H1 (cell line): ENCODE measurements at regions of chr13 and their contacts with region 1.

Region 1: GRCh38 chr13:26186118-26186870 is 35.8 kb downstream of the RNF6 start:
- DNase-seq: peak; percentile 90 to 91
- H3K4me3 ChIP-seq: peak overlapping the region; percentile 50 to 73 (median 62)
- H3K27ac ChIP-seq: no peak overlapping the region
- H3K4me1 ChIP-seq: peaks cover 0 to 4% (median 1%) of the 10 kb centered on the region in 4 experiments; a peak in 2 of 7 replicates
- H3K27me3 ChIP-seq: peaks cover 0 to 7% (median 1%) of the 10 kb centered on the region in 4 experiments; a peak in 4 of 7 replicates
- CTCF ChIP-seq: peak; percentile 59 to 87 (median 64)
- EP300 ChIP-seq: no peak
- POLR2A ChIP-seq: no peak
- RAD21 ChIP-seq: peak; percentile 38 to 50; a peak in 2 of 4 replicates

Region 2: DNA sequence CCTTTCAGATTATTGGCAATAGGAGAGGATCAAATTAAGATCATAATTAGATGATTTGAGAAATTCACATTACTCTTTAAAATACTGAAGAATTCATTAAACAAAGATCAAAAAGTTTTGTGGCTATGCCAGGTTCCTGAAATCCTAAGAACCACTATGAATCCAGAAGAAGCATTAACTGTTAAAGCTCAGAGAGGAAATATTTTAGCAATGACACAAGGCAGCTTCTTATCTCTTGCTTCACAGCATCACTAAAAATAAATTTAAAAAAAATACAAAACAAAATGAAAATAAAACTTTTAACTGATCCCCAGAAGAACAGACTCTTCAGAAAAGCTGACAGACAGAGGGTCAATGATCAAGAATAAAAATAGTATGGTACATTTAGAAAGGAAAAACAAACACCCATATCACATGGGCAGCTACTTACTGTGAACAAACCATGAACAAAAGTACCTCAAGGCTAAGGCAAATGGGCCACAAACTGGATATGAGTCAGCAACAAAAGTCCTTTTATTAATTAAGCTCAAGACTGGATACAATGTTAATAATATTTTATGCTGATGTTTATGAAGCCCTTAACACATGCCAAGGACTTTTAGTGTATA is 16.2 kb after region 1 on chr13:
- CTCF ChIA-PET with region 1: interaction called, 12 read pairs
- POLR2A ChIA-PET with region 1: no interaction called
- DNase-seq: no peak
- H3K4me3 ChIP-seq: no peak overlapping the region
- H3K27ac ChIP-seq: no peak overlapping the region
- H3K4me1 ChIP-seq: peaks cover 0 to 4% (median 0%) of the 10 kb centered on the region in 4 experiments; a peak in 1 of 7 replicates
- H3K27me3 ChIP-seq: peaks cover 0 to 1% (median 0%) of the 10 kb centered on the region in 4 experiments; a peak in 1 of 7 replicates
- CTCF ChIP-seq: no peak
- EP300 ChIP-seq: no peak
- POLR2A ChIP-seq: no peak
- RAD21 ChIP-seq: no peak

Region 3: DNA sequence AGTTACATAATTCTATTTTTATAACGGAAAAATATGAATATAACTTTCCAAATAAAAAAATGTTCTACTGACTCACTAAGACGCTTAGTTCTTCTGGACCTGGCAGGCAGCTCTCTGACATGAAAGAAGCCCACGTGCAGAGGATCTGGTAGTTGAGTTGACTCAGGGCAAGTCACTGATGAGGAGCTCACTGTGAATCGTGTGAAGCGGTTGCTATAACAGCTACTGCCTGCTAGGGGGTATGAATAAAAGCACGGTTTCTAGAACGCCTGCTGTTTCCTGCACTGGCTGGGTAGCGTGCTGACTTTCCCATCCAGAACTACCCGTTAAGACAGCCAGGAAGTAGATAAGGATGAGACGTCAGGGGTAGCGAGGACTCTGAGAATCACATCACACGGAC is 316.5 kb after region 1 on chr13:
- CTCF ChIA-PET with region 1: interaction called, 25 read pairs
- POLR2A ChIA-PET with region 1: no interaction called
- DNase-seq: no peak
- H3K4me3 ChIP-seq: no peak overlapping the region
- H3K27ac ChIP-seq: no peak overlapping the region
- H3K4me1 ChIP-seq: peaks cover 0 to 5% (median 2%) of the 10 kb centered on the region in 4 experiments; a peak in 2 of 7 replicates
- H3K27me3 ChIP-seq: no peaks in the 10 kb centered on the region; a peak in 1 of 7 replicates
- CTCF ChIP-seq: peak in 2 of 3 experiments; percentile 12 to 22; a peak in 2 of 4 replicates
- EP300 ChIP-seq: no peak
- POLR2A ChIP-seq: no peak
- RAD21 ChIP-seq: peak; percentile 10 to 17; a peak in 2 of 4 replicates